ENCODE measurements at regions of chr2 and their contacts with region 1.

Region 1: GRCh38 chr2:25197336-25198208 is 29.2 kb upstream of the POMC start:
- DNase-seq: no peak
- ATAC-seq: peak; percentile 18
- H3K4me3 Mint-ChIP-seq: no peak overlapping the region
- H3K27ac Mint-ChIP-seq: no peak overlapping the region
- H3K4me1 Mint-ChIP-seq: peaks cover 8% of the 10 kb centered on the region
- H3K27me3 Mint-ChIP-seq: no peaks in the 10 kb centered on the region; the same call in 1 of the 2 replicates
- CTCF ChIP-seq: no peak

Region 2: DNA sequence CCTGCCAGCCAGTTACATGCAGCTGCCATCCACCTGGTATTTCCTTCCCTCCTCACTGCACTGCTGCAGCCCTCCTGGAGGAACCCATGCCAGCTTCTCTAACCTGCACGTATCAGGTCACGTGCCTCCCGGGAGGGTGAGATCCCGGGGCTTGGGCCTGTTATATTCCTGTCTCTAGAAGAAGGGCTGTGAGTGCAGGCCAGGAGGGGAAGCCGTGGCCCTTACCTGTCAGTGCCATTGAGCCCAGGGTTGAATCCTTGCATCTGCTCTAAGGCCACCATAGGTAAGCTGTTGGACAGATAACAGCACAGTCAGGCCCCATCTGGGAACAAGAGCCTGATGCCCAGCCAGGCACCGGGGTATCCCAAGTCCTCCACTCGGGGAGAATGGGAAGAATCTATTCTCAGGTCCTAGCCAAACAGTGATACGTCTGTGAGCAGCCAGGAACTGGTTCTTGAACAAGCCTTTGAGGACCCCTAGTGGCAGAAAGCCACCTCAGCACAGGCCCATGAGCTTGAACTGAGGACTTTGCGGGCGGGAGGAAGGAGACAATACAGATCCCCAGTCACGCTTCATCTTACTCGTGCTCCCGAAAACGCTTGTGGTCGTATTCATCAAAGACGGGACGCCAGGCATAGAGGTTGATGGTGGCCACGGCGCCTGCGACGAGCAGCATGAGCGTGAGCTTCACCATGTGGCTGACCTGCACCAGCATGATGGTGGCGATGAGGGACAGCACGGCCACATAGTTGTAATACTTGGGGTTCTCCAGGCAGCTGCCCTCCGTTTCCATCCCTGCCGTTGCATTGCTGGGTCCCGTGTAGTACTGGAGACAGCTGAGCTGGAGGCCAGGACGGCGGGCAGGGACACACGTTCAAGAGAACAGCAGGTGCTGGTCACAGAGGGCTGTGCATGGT is 370.0 kb before region 1 on chr2:
- CTCF ChIA-PET with region 1: no interaction called
- POLR2A ChIA-PET with region 1: no interaction called
- DNase-seq: peak; percentile 89
- ATAC-seq: peak; percentile 89
- H3K4me3 Mint-ChIP-seq: no peak overlapping the region
- H3K27ac Mint-ChIP-seq: peak overlapping the region; percentile 90
- H3K4me1 Mint-ChIP-seq: peaks cover 33% of the 10 kb centered on the region
- H3K27me3 Mint-ChIP-seq: no peaks in the 10 kb centered on the region; the same call in 1 of the 2 replicates
- CTCF ChIP-seq: peak; percentile 77

Region 3: GRCh38 chr2:25053041-25053440 is 144.5 kb before region 1 on chr2:
- CTCF ChIA-PET with region 1: no interaction called
- POLR2A ChIA-PET with region 1: no interaction called
- DNase-seq: no peak
- ATAC-seq: no peak
- H3K4me3 Mint-ChIP-seq: no peak overlapping the region
- H3K27ac Mint-ChIP-seq: no peak overlapping the region
- H3K4me1 Mint-ChIP-seq: peaks cover 21% of the 10 kb centered on the region
- H3K27me3 Mint-ChIP-seq: no peaks in the 10 kb centered on the region
- CTCF ChIP-seq: no peak

Region 4: GRCh38 chr2:25165992-25166875 is 31.3 kb before region 1 on chr2:
- CTCF ChIA-PET with region 1: interaction called, 22 read pairs
- POLR2A ChIA-PET with region 1: no interaction called
- DNase-seq: peak; percentile 70
- ATAC-seq: peak; percentile 73
- H3K4me3 Mint-ChIP-seq: no peak overlapping the region
- H3K27ac Mint-ChIP-seq: no peak overlapping the region
- H3K4me1 Mint-ChIP-seq: peaks cover 9% of the 10 kb centered on the region
- H3K27me3 Mint-ChIP-seq: peaks cover 63% of the 10 kb centered on the region
- CTCF ChIP-seq: no peak

Region 5: GRCh38 chr2:25178971-25179370 is 18.6 kb before region 1 on chr2:
- CTCF ChIA-PET with region 1: no interaction called
- POLR2A ChIA-PET with region 1: no interaction called
- DNase-seq: no peak
- ATAC-seq: no peak
- H3K4me3 Mint-ChIP-seq: no peak overlapping the region
- H3K27ac Mint-ChIP-seq: no peak overlapping the region
- H3K4me1 Mint-ChIP-seq: 0 out of 2 replicates have a peak, but pooled peaks cover 4% of the 10 kb centered on the region
- H3K27me3 Mint-ChIP-seq: peaks cover 1% of the 10 kb centered on the region
- CTCF ChIP-seq: no peak